A673 (cell line): ENCODE measurements at regions of chr12 and their contacts with region 1.

Region 1: DNA sequence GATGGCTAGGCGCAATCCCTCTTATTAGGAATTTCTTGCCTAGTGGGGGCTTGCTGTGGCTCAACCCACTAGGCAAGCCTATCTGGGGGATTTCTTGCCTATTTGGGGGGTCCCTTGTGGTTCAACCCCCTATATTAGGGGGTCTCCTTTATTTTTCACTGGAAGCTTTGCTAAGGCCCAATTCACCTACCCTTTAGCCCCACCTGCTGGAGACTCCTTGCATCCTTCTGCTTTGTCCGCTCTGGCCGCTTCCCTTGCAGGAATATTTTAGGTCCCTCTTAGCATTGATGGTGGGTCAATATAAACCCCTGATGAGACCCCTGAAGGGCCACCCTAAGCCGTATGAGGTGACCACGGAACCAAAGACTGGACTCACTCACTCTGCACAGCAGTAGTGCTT is 1552.1 kb downstream of the AACS start:
- DNase-seq: peak; percentile 55
- H3K4me3 ChIP-seq: no peak overlapping the region
- H3K27ac ChIP-seq: no peak overlapping the region
- H3K4me1 ChIP-seq: no peaks in the 10 kb centered on the region
- H3K27me3 ChIP-seq: no peaks in the 10 kb centered on the region
- CTCF ChIP-seq: peak; percentile 74

Region 2: DNA sequence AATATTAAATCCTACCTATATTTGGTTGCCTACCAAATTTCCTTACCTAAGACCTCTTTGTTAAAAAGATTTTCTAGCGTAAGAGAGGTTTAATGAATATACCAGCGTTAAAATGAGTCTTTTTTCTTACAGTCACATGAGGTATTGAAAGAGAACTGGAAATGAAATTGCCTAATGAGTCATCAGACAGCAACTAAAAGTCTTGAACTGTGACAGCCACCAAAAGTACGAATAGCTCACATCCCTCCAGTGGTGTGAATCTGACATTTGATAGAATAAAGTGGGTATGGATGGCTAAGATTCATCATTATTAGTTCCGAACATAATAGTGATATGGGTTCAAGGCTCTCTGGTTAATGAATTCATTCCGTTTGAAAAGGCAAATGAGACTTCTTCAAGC is 254.8 kb before region 1 on chr12:
- CTCF ChIA-PET with region 1: no interaction called
- POLR2A ChIA-PET with region 1: no interaction called
- intact Hi-C with region 1: loop called (anchors 5 kb)
- DNase-seq: peak; percentile 36
- H3K4me3 ChIP-seq: no peak overlapping the region
- H3K27ac ChIP-seq: no peak overlapping the region
- H3K4me1 ChIP-seq: peaks cover 7% of the 10 kb centered on the region
- H3K27me3 ChIP-seq: no peaks in the 10 kb centered on the region
- CTCF ChIP-seq: no peak